ENCODE measurements at regions of chr6 and their contacts with region 1.

Region 1: GRCh38 chr6:158270389-158271127 is 41.7 kb upstream of the TULP4 start:
- DNase-seq: no peak
- H3K4me3 Mint-ChIP-seq: peak overlapping the region; percentile 20
- H3K27ac Mint-ChIP-seq: no peak overlapping the region
- H3K4me1 Mint-ChIP-seq: peaks cover 33% of the 10 kb centered on the region
- H3K27me3 Mint-ChIP-seq: no peaks in the 10 kb centered on the region

Region 2: GRCh38 chr6:158290659-158291058 is 20.1 kb after region 1 on chr6:
- intact Hi-C with region 1: loop called (anchors 1 kb)
- DNase-seq: peak; percentile 52
- H3K4me3 Mint-ChIP-seq: peak overlapping the region; percentile 64
- H3K27ac Mint-ChIP-seq: peak overlapping the region; percentile 79
- H3K4me1 Mint-ChIP-seq: peaks cover 42% of the 10 kb centered on the region
- H3K27me3 Mint-ChIP-seq: no peaks in the 10 kb centered on the region

Region 3: GRCh38 chr6:158718461-158719046 is 448.0 kb after region 1 on chr6:
- intact Hi-C with region 1: loop called (anchors 1 kb)
- DNase-seq: no peak
- H3K4me3 Mint-ChIP-seq: no peak overlapping the region
- H3K27ac Mint-ChIP-seq: no peak overlapping the region
- H3K4me1 Mint-ChIP-seq: peaks cover 69% of the 10 kb centered on the region
- H3K27me3 Mint-ChIP-seq: peaks cover 2% of the 10 kb centered on the region

Region 4: GRCh38 chr6:158769771-158770432 is 499.3 kb after region 1 on chr6:
- intact Hi-C with region 1: no loop called
- DNase-seq: no peak
- H3K4me3 Mint-ChIP-seq: no peak overlapping the region
- H3K27ac Mint-ChIP-seq: peak overlapping the region; percentile 75
- H3K4me1 Mint-ChIP-seq: peaks cover 56% of the 10 kb centered on the region
- H3K27me3 Mint-ChIP-seq: no peaks in the 10 kb centered on the region

Measured in activated T-helper 1 cell treated with anti-CD3 and anti-CD28 coated beads, Interleukin-12 subunit alpha, Interleukin-12 subunit beta, Interleukin-2, Interleukin-4 antibody, amounts not matched to agents 30 ng/mL and 10 ng/mL and 1 ng/mL, durations not matched to agents 14 hours and 24 hours and 36 hours (primary cell).